Left ventricle myocardium superior (tissue), 1 donor: ENCODE measurements at regions of chr1 and their contacts with region 1.

Region 1: GRCh38 chr1:100188617-100189016 is 10.6 kb upstream of the LRRC39 start:
- DNase-seq: no peak
- ATAC-seq: peak; percentile 92

Region 2: GRCh38 chr1:100164702-100165101 is 23.9 kb before region 1 on chr1:
- intact Hi-C with region 1: loop called (anchors 1 kb)
- DNase-seq: no peak
- ATAC-seq: no peak